ENCODE measurements at regions of chr2 and their contacts with region 1.

Region 1: GRCh38 chr2:204325468-204325867 is 219.8 kb upstream of the PARD3B start:
- DNase-seq: peak; percentile 85
- H3K4me3 Mint-ChIP-seq: no peak overlapping the region
- H3K27ac Mint-ChIP-seq: no peak overlapping the region
- H3K4me1 Mint-ChIP-seq: peaks cover 11% of the 10 kb centered on the region
- H3K27me3 Mint-ChIP-seq: no peaks in the 10 kb centered on the region
- CTCF ChIP-seq: peak; percentile 73

Region 2: GRCh38 chr2:204145263-204145751 is 180.2 kb before region 1 on chr2:
- CTCF ChIA-PET with region 1: interaction called, 3 read pairs
- POLR2A ChIA-PET with region 1: no interaction called
- intact Hi-C with region 1: loop called (anchors 5 kb)
- DNase-seq: peak; percentile 81
- H3K4me3 Mint-ChIP-seq: peak overlapping the region; percentile 69
- H3K27ac Mint-ChIP-seq: no peak overlapping the region
- H3K4me1 Mint-ChIP-seq: peaks cover 5% of the 10 kb centered on the region
- H3K27me3 Mint-ChIP-seq: peaks cover 57% of the 10 kb centered on the region
- CTCF ChIP-seq: peak; percentile 90

Region 3: DNA sequence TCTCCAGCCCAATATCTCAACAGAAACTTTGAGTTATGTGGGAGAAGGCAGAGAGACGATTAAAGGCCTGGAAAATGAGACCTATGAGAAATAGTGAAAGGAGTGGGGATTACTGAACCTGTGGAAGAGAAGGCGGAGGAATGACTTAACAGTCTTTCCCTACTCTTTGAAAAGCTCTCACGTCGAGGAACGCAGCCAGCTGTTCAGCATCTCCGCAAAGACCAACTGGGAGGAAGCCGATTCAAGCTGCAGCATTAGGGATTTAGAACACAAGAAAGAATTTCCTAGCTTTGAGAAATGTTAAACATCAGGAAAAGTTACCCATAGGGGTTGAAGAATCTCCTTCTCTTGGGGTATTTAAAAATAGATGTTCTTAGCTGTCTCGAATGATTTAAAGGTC is 13.4 kb before region 1 on chr2:
- CTCF ChIA-PET with region 1: interaction called, 10 read pairs
- POLR2A ChIA-PET with region 1: no interaction called
- intact Hi-C with region 1: no loop called
- DNase-seq: no peak
- H3K4me3 Mint-ChIP-seq: no peak overlapping the region
- H3K27ac Mint-ChIP-seq: no peak overlapping the region
- H3K4me1 Mint-ChIP-seq: no peaks in the 10 kb centered on the region
- H3K27me3 Mint-ChIP-seq: no peaks in the 10 kb centered on the region
- CTCF ChIP-seq: no peak

Region 4: DNA sequence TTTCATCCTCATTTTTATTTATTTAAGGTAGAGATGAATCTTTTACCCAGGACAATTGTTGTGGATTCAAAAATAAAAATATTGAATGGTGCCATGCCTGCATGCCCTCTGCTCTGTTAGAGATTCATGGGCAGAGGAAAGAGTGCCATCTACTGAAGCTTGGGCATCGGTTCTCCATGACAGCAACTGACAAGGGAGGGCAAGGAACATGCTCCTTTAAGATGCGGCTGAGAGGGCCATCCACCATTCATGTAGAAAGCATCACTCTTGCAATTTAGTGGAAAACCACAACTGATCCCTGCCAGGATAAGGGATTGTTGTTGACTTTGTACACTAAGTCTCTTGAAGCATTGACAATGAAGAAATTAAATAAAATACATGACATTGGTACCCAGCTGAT is 299.7 kb after region 1 on chr2:
- CTCF ChIA-PET with region 1: interaction called, 4 read pairs
- POLR2A ChIA-PET with region 1: no interaction called
- intact Hi-C with region 1: loop called (anchors 1 kb)
- DNase-seq: peak; percentile 20
- H3K4me3 Mint-ChIP-seq: no peak overlapping the region
- H3K27ac Mint-ChIP-seq: no peak overlapping the region
- H3K4me1 Mint-ChIP-seq: peaks cover 12% of the 10 kb centered on the region
- H3K27me3 Mint-ChIP-seq: no peaks in the 10 kb centered on the region
- CTCF ChIP-seq: peak; percentile 30

Region 5: GRCh38 chr2:204871231-204871953 is 545.9 kb after region 1 on chr2:
- CTCF ChIA-PET with region 1: interaction called, 4 read pairs
- POLR2A ChIA-PET with region 1: no interaction called
- intact Hi-C with region 1: loop called (anchors 5 kb)
- DNase-seq: peak; percentile 47
- H3K4me3 Mint-ChIP-seq: no peak overlapping the region
- H3K27ac Mint-ChIP-seq: peak overlapping the region; percentile 7
- H3K4me1 Mint-ChIP-seq: peaks cover 17% of the 10 kb centered on the region
- H3K27me3 Mint-ChIP-seq: no peaks in the 10 kb centered on the region
- CTCF ChIP-seq: peak; percentile 30

Region 6: DNA sequence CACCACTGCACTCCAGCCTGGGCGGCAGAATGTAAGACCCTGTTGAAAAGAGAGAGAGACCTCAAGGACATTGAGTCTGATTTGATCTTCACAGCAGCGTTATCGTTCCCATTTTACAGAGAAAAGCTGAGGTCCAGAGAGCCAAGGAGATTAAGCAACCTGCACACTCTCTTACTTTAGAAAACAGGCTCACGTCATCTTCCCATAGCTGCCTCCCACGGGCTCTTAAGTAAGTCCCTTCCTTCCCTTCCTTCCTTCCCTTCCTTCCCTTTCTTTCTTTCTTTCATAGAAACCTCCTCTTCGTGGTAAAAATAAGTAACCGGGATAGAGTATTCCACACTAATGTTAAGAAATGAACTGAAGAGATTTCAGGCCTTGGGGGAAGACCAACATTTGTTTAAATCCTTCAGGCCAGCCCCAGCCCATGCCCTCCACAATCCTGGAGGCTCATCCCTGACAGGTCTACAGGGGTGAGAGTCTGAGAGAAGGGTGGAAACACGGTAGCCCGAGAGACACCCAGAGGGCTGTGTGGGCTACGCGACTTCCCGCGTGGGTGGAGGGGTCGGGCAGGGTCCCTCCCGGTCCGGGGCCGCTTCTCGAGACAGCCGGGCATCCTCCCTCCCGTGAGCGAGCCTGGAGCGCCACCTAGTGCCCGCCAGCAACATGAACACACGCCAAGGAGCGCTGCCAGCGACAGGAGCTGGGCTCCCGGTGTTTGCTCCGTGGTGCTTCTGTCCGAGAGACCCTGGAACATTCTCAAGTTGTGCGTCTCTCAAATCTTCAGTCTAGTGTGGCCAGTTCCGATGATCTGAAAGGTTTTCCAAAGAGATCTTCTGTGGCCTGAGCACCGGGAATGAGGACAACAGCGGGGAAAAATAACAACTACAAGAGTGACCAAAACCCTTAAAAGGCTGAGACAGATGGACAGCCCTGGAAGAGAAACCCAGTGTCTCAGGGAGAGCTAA is 1600.2 kb after region 1 on chr2:
- CTCF ChIA-PET with region 1: interaction called, 11 read pairs
- POLR2A ChIA-PET with region 1: no interaction called
- intact Hi-C with region 1: loop called (anchors 1 kb)
- DNase-seq: peak; percentile 73
- H3K4me3 Mint-ChIP-seq: peak overlapping the region; percentile 38
- H3K27ac Mint-ChIP-seq: no peak overlapping the region
- H3K4me1 Mint-ChIP-seq: no peaks in the 10 kb centered on the region
- H3K27me3 Mint-ChIP-seq: peaks cover 44% of the 10 kb centered on the region
- CTCF ChIP-seq: peak; percentile 93